CD8-positive, alpha-beta T cell (primary cell): ENCODE measurements at regions of chr19 and their contacts with region 1.

Region 1: GRCh38 chr19:35495107-35496064 is 5.1 kb upstream of the KRTDAP start:
- DNase-seq: peak; percentile 38 to 80 (median 61)
- ATAC-seq: peak; percentile 100
- H3K4me3 ChIP-seq: no peak overlapping the region
- H3K4me3 Mint-ChIP-seq: peak overlapping the region; percentile 22
- H3K27ac ChIP-seq: no peak overlapping the region
- H3K27ac Mint-ChIP-seq: no peak overlapping the region
- H3K4me1 ChIP-seq: no peaks in the 10 kb centered on the region
- H3K4me1 Mint-ChIP-seq: peaks cover 7% of the 10 kb centered on the region
- H3K27me3 ChIP-seq: no peaks in the 10 kb centered on the region
- H3K27me3 Mint-ChIP-seq: peaks cover 8% of the 10 kb centered on the region
- CTCF ChIP-seq: peak; percentile 97

Region 2: DNA sequence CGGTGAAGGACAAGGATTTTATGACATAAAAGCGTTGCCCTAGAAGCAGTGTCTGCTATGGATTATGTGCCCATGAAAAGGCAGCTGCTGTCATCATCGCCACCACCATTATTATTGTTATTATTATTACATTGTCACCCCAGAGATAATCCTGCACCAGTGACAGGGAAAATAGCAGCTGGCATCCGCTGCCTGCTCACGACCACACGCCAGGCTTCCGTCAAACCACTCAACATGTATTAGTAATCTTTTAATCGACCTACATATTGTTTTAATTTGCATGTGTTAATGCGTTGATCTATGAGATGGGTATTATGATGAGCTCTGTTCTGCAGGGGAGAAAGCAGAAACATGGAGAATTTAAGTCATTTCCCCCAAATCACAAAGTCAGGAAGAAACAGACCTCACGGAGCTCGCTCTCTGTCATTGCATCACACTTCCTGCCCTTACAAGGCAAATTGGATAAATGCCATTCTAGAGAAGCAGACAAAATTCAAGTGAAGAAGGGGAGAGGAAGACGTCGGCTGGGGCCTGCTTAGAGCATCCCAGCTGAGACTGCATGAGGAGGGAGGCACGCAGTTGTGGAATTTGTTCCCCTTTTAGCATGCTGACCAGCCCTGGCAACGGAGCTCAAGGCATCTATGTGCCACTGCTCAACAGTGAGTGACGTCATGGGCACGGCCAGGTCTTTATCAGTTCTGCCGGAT is 137.4 kb before region 1 on chr19 and contains the start of gene FFAR3:
- CTCF ChIA-PET with region 1: interaction called, 40 read pairs
- POLR2A ChIA-PET with region 1: interaction called, 4 read pairs
- intact Hi-C with region 1: no loop called
- DNase-seq: peak in 1 of 9 experiments; percentile 26
- ATAC-seq: no peak
- H3K4me3 ChIP-seq: no peak within 1 kb of the TSS
- H3K4me3 Mint-ChIP-seq: peak within 1 kb of the TSS; percentile 4
- H3K27ac ChIP-seq: no peak within 1 kb of the TSS
- H3K27ac Mint-ChIP-seq: no peak within 1 kb of the TSS
- H3K4me1 ChIP-seq: peaks cover 10% of the 10 kb centered on the region
- H3K4me1 Mint-ChIP-seq: peaks cover 8% of the 10 kb centered on the region
- H3K27me3 ChIP-seq: no peaks in the 10 kb centered on the region
- H3K27me3 Mint-ChIP-seq: peaks cover 12% of the 10 kb centered on the region
- CTCF ChIP-seq: no peak
- total RNA-seq, gene FFAR3: not detected

Region 3: GRCh38 chr19:35462476-35462953 is 32.9 kb before region 1 on chr19:
- CTCF ChIA-PET with region 1: interaction called, 22 read pairs
- POLR2A ChIA-PET with region 1: no interaction called
- intact Hi-C with region 1: no loop called
- DNase-seq: peak; percentile 15 to 92 (median 65)
- ATAC-seq: peak; percentile 91
- H3K4me3 ChIP-seq: peak overlapping the region in 1 of 2 experiments; percentile 6
- H3K4me3 Mint-ChIP-seq: peak overlapping the region; percentile 73
- H3K27ac ChIP-seq: peak overlapping the region; percentile 40 to 91
- H3K27ac Mint-ChIP-seq: peak overlapping the region; percentile 95
- H3K4me1 ChIP-seq: peaks cover 28% of the 10 kb centered on the region
- H3K4me1 Mint-ChIP-seq: peaks cover 30% of the 10 kb centered on the region
- H3K27me3 ChIP-seq: no peaks in the 10 kb centered on the region
- H3K27me3 Mint-ChIP-seq: no peaks in the 10 kb centered on the region
- CTCF ChIP-seq: no peak

Region 4: DNA sequence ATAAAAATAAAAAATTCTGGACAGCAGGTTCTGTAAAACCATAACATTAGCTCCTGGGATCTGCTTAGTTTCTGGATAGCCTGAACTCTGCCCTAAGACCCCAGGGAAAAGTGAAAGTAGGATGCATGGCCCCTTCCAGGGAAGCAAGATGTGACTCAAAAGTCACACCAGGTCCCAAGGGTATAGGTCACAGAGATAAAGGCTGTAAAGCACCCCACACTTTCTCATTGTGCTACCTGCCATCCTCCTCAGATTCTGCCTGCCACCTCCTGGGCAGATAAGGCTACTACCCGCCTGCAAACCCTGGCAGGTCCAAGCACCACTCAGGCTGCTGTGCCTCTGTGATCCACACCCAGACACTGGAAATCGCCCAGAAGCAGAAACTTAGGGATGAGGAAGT is 26.7 kb before region 1 on chr19:
- CTCF ChIA-PET with region 1: interaction called, 22 read pairs
- POLR2A ChIA-PET with region 1: no interaction called
- intact Hi-C with region 1: no loop called
- DNase-seq: peak; percentile 40 to 83 (median 68)
- ATAC-seq: peak; percentile 100
- H3K4me3 ChIP-seq: no peak overlapping the region
- H3K4me3 Mint-ChIP-seq: no peak overlapping the region
- H3K27ac ChIP-seq: no peak overlapping the region
- H3K27ac Mint-ChIP-seq: no peak overlapping the region
- H3K4me1 ChIP-seq: peaks cover 3% of the 10 kb centered on the region
- H3K4me1 Mint-ChIP-seq: peaks cover 8% of the 10 kb centered on the region
- H3K27me3 ChIP-seq: no peaks in the 10 kb centered on the region
- H3K27me3 Mint-ChIP-seq: no peaks in the 10 kb centered on the region
- CTCF ChIP-seq: peak; percentile 68

Region 5: DNA sequence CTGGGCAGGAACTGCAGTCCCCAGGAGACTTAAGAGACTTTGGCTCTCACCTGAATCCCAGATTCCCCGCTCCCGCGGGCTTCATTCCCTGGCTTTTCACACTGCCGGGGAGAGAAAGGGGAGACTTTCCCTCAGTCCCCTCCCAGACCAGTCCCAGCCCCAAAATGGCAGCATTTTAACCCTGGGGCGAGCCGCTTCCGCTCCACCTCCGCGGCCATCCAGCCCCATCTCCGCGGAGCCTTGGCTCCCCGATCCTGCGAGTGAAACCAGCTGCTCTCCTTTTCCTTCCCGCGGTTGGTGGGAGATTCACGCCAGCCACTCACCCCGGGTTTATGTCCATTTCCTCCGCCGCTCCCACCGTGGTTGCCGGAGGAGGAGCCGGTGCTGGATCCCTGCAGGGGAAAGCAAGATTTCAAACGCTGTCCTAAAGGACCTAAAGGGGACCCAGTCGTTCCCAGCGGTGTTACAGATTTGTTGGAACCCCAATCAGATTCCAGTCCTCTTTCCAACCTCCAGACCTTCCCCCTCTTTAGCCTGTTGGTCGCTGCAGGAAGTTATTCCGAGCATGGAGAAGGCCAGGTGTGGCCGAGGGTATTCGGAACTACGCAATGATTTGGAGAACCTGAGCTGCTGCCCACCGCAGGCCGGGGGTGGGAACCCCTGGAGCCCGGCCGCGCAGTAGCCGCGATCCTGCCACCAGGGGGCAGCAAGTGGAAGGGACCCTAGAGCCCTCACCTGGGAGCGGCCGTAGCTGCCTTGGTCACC is 14.7 kb after region 1 on chr19:
- CTCF ChIA-PET with region 1: interaction called, 22 read pairs
- POLR2A ChIA-PET with region 1: no interaction called
- intact Hi-C with region 1: no loop called
- DNase-seq: peak; percentile 56 to 84 (median 77)
- ATAC-seq: peak; percentile 75
- H3K4me3 ChIP-seq: peak overlapping the region; percentile 49 to 59
- H3K4me3 Mint-ChIP-seq: peak overlapping the region; percentile 70
- H3K27ac ChIP-seq: peak overlapping the region in 1 of 2 experiments; percentile 53
- H3K27ac Mint-ChIP-seq: no peak overlapping the region
- H3K4me1 ChIP-seq: peaks cover 18% of the 10 kb centered on the region
- H3K4me1 Mint-ChIP-seq: peaks cover 17% of the 10 kb centered on the region
- H3K27me3 ChIP-seq: peaks cover 0 to 7% of the 10 kb centered on the region in 2 experiments
- H3K27me3 Mint-ChIP-seq: peaks cover 44% of the 10 kb centered on the region
- CTCF ChIP-seq: peak; percentile 80

Region 6: DNA sequence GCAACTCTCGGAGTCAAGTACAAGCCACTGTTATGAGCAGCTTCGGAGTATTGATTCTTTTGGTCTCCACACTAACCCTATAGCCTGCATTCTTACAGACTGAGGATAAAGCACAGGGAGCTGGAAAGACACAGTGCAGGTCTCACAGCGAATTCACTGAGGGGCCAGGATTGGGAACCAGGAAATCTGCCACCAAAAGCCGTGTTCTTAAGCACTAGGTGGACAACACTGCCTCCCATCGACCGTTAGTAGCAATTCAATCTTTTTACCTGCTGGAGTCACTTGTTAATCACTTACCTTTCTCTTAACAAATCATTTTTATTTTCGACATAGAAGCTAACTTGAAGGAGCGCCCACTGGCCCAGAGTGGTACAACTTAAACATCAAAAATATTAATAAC is 96.8 kb after region 1 on chr19:
- CTCF ChIA-PET with region 1: no interaction called
- POLR2A ChIA-PET with region 1: no interaction called
- intact Hi-C with region 1: no loop called
- DNase-seq: peak in 2 of 9 experiments; percentile 64 to 71
- ATAC-seq: no peak
- H3K4me3 ChIP-seq: no peak overlapping the region
- H3K4me3 Mint-ChIP-seq: no peak overlapping the region
- H3K27ac ChIP-seq: no peak overlapping the region
- H3K27ac Mint-ChIP-seq: no peak overlapping the region
- H3K4me1 ChIP-seq: no peaks in the 10 kb centered on the region
- H3K4me1 Mint-ChIP-seq: no peaks in the 10 kb centered on the region
- H3K27me3 ChIP-seq: peaks cover 0 to 2% of the 10 kb centered on the region in 2 experiments
- H3K27me3 Mint-ChIP-seq: peaks cover 11% of the 10 kb centered on the region
- CTCF ChIP-seq: peak; percentile 48